PC-9 (cell line): ENCODE measurements at regions of chr5 and their contacts with region 1.

Region 1: GRCh38 chr5:149434162-149435014 is 55.3 kb upstream of the IL17B start:
- DNase-seq: peak in 1 of 2 experiments; percentile 59
- H3K4me3 ChIP-seq: no peak overlapping the region
- H3K27ac ChIP-seq: no peak overlapping the region
- H3K4me1 ChIP-seq: peaks cover 11% of the 10 kb centered on the region
- H3K27me3 ChIP-seq: no peaks in the 10 kb centered on the region
- CTCF ChIP-seq: peak; percentile 93

Region 2: DNA sequence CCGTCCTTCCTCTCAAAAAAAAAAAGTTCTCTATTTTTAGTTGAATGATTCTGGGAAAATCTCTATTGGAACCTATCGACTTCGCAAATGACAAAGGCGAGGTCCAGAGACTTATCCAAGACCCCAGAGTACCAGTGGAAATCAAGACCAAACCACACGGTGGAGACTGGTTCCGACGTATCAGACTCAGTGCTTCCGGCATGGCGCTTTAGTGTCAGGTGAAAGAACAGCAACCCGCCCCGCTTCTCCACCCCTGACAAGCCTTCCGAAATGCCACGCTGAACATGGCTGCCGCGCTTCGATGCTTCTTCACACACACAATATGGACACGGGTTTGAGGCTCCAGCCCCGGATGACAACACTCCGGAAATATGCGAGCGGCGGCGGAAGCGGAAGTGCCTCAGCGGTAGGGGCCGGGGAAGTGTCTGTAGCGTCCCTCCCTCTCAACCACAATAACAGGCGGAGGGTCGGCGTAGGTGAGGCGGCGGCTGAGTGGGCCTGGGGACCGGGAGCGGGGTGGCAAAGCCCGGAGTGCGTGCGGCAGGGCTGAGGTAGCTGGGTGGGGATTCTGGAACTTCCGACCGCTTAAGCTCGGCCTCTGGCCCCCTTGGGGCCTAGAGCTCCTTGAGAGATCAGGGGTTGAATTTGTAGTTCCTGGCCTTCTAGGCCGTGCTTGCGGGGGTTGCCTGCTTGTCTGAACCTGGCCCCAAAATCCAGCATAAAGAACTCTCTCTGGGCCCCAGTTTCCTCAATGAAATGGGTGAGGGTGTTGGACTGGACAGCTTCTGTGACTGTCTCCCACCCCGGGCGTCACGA is 1050.6 kb before region 1 on chr5 and contains the start of gene FBXO38:
- CTCF ChIA-PET with region 1: no interaction called
- POLR2A ChIA-PET with region 1: no interaction called
- intact Hi-C with region 1: no loop called
- DNase-seq: peak; percentile 92
- H3K4me3 ChIP-seq: peak within 1 kb of the TSS; percentile 65
- H3K27ac ChIP-seq: peak within 1 kb of the TSS; percentile 66
- H3K4me1 ChIP-seq: peaks cover 38% of the 10 kb centered on the region
- H3K27me3 ChIP-seq: no peaks in the 10 kb centered on the region
- CTCF ChIP-seq: no peak
- total RNA-seq, gene FBXO38: 39.2 and 49.8 TPM in 2 replicates

Region 3: GRCh38 chr5:149317281-149318048 is 116.9 kb before region 1 on chr5:
- CTCF ChIA-PET with region 1: interaction called, 15 read pairs
- POLR2A ChIA-PET with region 1: no interaction called
- intact Hi-C with region 1: loop called (anchors 1 kb)
- DNase-seq: peak in 1 of 2 experiments; percentile 34
- H3K4me3 ChIP-seq: no peak overlapping the region
- H3K27ac ChIP-seq: no peak overlapping the region
- H3K4me1 ChIP-seq: peaks cover 3% of the 10 kb centered on the region; the same call in 1 of the 2 replicates
- H3K27me3 ChIP-seq: no peaks in the 10 kb centered on the region
- CTCF ChIP-seq: peak; percentile 79

Region 4: GRCh38 chr5:149367249-149367971 is 67.0 kb before region 1 on chr5:
- CTCF ChIA-PET with region 1: interaction called, 5 read pairs
- POLR2A ChIA-PET with region 1: no interaction called
- intact Hi-C with region 1: loop called (anchors 5 kb)
- DNase-seq: peak; percentile 64 to 76
- H3K4me3 ChIP-seq: no peak overlapping the region
- H3K27ac ChIP-seq: no peak overlapping the region
- H3K4me1 ChIP-seq: no peaks in the 10 kb centered on the region
- H3K27me3 ChIP-seq: no peaks in the 10 kb centered on the region
- CTCF ChIP-seq: peak; percentile 84

Region 5: GRCh38 chr5:149381987-149382340 is 52.4 kb before region 1 on chr5:
- CTCF ChIA-PET with region 1: interaction called, 31 read pairs
- POLR2A ChIA-PET with region 1: no interaction called
- intact Hi-C with region 1: loop called (anchors 1 kb)
- DNase-seq: peak in 1 of 2 experiments; percentile 81
- H3K4me3 ChIP-seq: no peak overlapping the region
- H3K27ac ChIP-seq: no peak overlapping the region
- H3K4me1 ChIP-seq: no peaks in the 10 kb centered on the region
- H3K27me3 ChIP-seq: no peaks in the 10 kb centered on the region
- CTCF ChIP-seq: peak; percentile 94

Region 6: DNA sequence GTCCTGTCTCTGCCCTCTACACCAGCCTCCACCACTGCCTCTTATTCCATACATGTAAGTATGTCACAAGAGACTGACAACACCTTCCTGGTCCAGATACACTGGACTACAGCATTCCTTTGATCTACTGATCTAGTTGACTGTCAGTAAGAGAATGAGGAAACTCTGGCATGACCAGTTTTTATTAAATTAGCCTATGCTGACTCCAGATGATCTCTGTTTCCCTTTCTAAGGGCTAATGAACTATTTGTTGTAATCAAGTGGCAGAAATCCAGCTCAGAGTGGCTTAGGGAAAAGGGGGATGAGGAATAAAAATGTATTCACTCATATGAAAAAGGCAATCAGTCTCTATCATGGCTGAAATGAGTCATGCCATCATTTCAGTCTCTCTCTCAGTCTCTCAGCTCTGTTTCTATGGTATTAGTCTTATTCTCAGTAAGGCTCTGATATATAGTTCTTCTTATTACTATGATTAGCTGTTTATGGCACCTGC is 152.4 kb after region 1 on chr5:
- CTCF ChIA-PET with region 1: no interaction called
- POLR2A ChIA-PET with region 1: no interaction called
- intact Hi-C with region 1: no loop called
- DNase-seq: peak in 1 of 2 experiments; percentile 83
- H3K4me3 ChIP-seq: no peak overlapping the region
- H3K27ac ChIP-seq: peak overlapping the region; percentile 47
- H3K4me1 ChIP-seq: peaks cover 23% of the 10 kb centered on the region
- H3K27me3 ChIP-seq: no peaks in the 10 kb centered on the region
- CTCF ChIP-seq: no peak